ENCODE measurements at regions of chr19 and their contacts with region 1.

Region 1: DNA sequence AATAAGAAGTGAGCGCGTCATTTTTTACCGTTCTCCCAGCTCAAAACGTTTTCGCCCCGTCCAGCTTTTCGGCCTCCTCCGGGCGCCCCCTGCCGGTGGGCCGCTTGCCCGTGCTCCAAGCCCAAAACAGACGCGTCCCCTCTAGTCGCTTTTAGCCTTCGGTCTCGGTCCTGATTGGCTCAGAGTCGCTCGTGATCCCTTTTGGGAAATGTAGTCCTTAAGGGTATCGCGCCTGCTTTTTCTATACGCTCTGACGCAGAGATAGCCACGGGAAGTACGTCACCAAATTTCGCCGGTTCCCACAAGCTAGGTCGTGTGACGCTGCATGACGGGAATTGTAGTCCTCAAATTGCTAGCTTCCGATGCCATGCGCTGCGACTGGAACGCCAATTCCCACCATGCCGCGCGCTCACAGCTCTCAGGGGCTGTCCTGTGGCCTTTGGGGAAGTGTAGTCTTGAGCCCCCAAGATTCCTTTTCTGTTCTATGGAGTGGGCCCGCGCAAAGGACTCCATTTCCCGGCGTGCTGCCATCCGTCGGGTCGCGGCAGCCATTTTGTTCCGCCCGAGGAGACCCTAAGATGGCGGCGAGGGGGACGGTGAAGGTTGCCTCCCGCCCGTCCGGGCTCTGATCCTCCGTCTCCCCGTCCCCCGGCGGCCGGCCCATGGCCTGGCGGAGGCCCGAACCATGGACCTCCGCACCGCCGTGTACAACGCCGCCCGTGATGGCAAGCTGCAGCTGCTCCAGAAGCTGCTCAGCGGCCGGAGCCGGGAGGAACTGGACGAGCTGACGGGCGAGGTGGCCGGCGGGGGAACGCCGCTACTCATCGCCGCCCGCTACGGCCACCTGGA is at the start of gene FEM1A:
- DNase-seq: peak; percentile 95 to 100 (median 97)
- ATAC-seq: peak; percentile 93
- H3K4me3 ChIP-seq: peak within 1 kb of the TSS; percentile 76
- H3K4me3 Mint-ChIP-seq: peak within 1 kb of the TSS; percentile 88
- H3K27ac ChIP-seq: peak within 1 kb of the TSS; percentile 83 to 87
- H3K27ac Mint-ChIP-seq: peak within 1 kb of the TSS; percentile 62
- H3K4me1 ChIP-seq: peaks cover 40% of the 10 kb centered on the region
- H3K4me1 Mint-ChIP-seq: peaks cover 26% of the 10 kb centered on the region
- H3K27me3 ChIP-seq: no peaks in the 10 kb centered on the region
- H3K27me3 Mint-ChIP-seq: no peaks in the 10 kb centered on the region
- CTCF ChIP-seq: peak; percentile 99
- total RNA-seq, gene FEM1A: 11.8 to 12.1 TPM

Region 2: GRCh38 chr19:4471403-4472173 is 319.8 kb before region 1 on chr19:
- CTCF ChIA-PET with region 1: no interaction called
- POLR2A ChIA-PET with region 1: interaction called, 13 read pairs
- intact Hi-C with region 1: loop called in 1 of 2 experiments (anchors 10 kb)
- DNase-seq: peak; percentile 92 to 100 (median 96)
- ATAC-seq: peak; percentile 84
- H3K4me3 ChIP-seq: peak overlapping the region; percentile 64
- H3K4me3 Mint-ChIP-seq: no peak overlapping the region
- H3K27ac ChIP-seq: peak overlapping the region; percentile 71 to 72
- H3K27ac Mint-ChIP-seq: no peak overlapping the region
- H3K4me1 ChIP-seq: peaks cover 35% of the 10 kb centered on the region
- H3K4me1 Mint-ChIP-seq: peaks cover 22% of the 10 kb centered on the region
- H3K27me3 ChIP-seq: no peaks in the 10 kb centered on the region
- H3K27me3 Mint-ChIP-seq: no peaks in the 10 kb centered on the region
- CTCF ChIP-seq: no peak

Region 3: DNA sequence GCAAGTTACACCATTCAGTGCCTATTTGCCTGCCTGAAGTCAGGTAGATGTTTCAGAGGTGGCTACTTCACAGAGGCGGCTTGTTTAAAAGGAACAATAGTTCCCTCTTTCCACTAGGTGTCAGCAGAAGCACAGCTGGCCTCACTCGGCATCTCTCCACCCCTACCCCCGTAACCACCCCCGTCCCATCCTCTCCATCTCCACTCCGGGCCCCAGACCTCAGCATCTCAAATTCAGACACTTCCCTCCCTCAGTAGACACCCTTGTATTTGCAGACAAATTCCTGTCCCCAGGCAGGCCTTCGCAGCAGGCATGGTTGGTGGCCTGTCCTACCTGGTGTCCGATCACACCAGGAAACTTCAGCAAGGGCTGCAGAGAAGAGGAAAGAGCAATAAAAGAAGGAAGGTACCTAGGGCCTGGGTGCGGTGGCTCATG is 58.7 kb before region 1 on chr19:
- CTCF ChIA-PET with region 1: interaction called, 52 read pairs
- POLR2A ChIA-PET with region 1: interaction called, 11 read pairs
- intact Hi-C with region 1: loop called (anchors 1 kb)
- DNase-seq: peak; percentile 11 to 83 (median 40)
- ATAC-seq: peak; percentile 93
- H3K4me3 ChIP-seq: no peak overlapping the region
- H3K4me3 Mint-ChIP-seq: no peak overlapping the region
- H3K27ac ChIP-seq: no peak overlapping the region
- H3K27ac Mint-ChIP-seq: no peak overlapping the region
- H3K4me1 ChIP-seq: peaks cover 6% of the 10 kb centered on the region
- H3K4me1 Mint-ChIP-seq: peaks cover 6% of the 10 kb centered on the region
- H3K27me3 ChIP-seq: no peaks in the 10 kb centered on the region
- H3K27me3 Mint-ChIP-seq: peaks cover 14% of the 10 kb centered on the region
- CTCF ChIP-seq: peak; percentile 75

Region 4: DNA sequence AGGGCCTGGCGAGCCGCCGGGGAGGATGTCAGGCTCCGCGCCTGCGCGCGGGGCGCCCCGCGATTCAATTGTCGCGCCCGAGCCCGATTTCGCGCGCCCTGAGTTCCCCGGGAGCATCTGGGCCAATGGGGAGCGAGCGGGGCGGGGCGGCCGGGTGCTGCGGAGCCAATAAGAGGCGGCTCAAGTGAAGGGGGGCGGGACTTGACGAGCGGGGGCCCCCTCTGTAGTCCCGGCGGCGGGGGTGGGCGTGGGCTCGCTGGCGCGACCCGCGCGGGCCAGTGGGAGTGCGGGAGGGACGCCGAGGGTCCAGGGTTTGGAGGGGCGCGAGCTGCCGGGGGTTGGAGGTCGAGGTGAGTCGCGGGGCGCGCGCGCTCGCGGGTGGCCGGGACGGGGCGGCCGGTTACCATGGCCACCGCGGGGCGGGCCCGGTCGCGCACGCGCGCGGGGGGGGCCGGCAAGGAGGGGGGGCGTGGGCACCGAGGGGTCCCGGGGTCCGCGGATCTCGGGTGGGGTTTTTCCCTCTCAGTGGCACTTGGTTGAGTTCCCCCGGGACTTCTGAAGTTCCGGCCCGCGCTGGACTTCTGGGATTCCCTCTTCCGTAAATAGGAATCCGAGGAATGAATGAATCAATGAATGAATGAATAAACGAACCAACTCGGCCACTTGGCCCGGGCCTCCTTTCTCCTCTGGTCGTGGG is 118.7 kb after region 1 on chr19:
- CTCF ChIA-PET with region 1: interaction called, 11 read pairs
- POLR2A ChIA-PET with region 1: interaction called, 18 read pairs
- intact Hi-C with region 1: no loop called
- DNase-seq: peak; percentile 87 to 96 (median 92)
- ATAC-seq: peak; percentile 88
- H3K4me3 ChIP-seq: peak overlapping the region; percentile 51
- H3K4me3 Mint-ChIP-seq: peak overlapping the region; percentile 98
- H3K27ac ChIP-seq: no peak overlapping the region
- H3K27ac Mint-ChIP-seq: peak overlapping the region; percentile 84
- H3K4me1 ChIP-seq: peaks cover 58% of the 10 kb centered on the region
- H3K4me1 Mint-ChIP-seq: peaks cover 52% of the 10 kb centered on the region
- H3K27me3 ChIP-seq: no peaks in the 10 kb centered on the region
- H3K27me3 Mint-ChIP-seq: no peaks in the 10 kb centered on the region
- CTCF ChIP-seq: no peak

Region 5: DNA sequence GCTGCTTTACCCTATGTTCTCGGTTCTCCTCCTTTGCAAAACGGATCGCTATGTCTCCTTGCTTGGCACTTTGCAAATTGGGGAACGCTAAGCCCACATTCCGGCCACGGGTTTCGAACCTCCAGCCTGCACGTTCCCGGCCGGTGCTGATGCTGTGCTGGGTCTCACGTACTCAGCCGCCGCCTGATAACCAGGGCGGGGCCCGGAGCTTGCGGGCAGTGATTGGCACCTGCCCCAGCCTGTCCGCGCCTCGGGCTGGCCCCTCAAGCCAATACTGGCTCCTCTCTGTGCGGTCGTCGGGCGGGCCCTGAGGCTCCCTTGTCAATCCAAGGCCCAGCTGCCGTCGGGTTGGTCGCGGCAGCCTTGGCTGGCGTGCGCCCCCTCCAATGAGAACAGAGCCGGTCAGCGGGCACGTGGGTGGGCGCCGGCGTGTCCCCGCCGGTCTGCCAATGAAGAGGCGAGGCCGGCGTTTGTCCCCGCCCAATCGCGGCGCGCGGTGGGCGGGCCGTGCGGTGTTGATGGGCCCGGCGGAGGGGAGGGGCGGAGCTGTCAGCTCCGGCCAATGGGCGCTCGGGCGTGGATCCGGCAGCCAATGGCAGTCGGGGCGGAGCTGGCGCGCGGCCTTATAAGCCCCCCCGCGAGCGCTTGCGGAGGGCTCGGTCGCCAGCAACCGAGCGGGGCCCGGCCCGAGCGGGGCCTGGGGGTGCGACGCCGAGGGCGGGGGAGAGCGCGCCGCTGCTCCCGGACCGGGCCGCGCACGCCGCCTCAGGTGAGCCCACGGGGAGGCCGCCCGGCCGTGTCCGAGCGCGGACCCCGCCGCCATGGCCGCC is 177.3 kb after region 1 on chr19 and contains the start of gene KDM4B:
- CTCF ChIA-PET with region 1: interaction called, 11 read pairs
- POLR2A ChIA-PET with region 1: interaction called, 16 read pairs
- intact Hi-C with region 1: loop called in 1 of 2 experiments (anchors 2 kb)
- DNase-seq: peak; percentile 96 to 100 (median 98)
- ATAC-seq: peak; percentile 88
- H3K4me3 ChIP-seq: peak within 1 kb of the TSS; percentile 63
- H3K4me3 Mint-ChIP-seq: peak within 1 kb of the TSS; percentile 92
- H3K27ac ChIP-seq: peak within 1 kb of the TSS; percentile 18 to 59
- H3K27ac Mint-ChIP-seq: peak within 1 kb of the TSS; percentile 87
- H3K4me1 ChIP-seq: peaks cover 44% of the 10 kb centered on the region
- H3K4me1 Mint-ChIP-seq: peaks cover 32% of the 10 kb centered on the region
- H3K27me3 ChIP-seq: no peaks in the 10 kb centered on the region
- H3K27me3 Mint-ChIP-seq: no peaks in the 10 kb centered on the region
- CTCF ChIP-seq: no peak
- total RNA-seq, gene KDM4B: 41.8 to 42.5 TPM

Measured in CD4-positive, alpha-beta T cell (primary cell).